ENCODE measurements at regions of chr5 and their contacts with region 1.

Region 1: GRCh38 chr5:112757468-112758208 is 20.0 kb downstream of the APC start:
- DNase-seq: no peak
- H3K4me3 ChIP-seq: no peak overlapping the region
- H3K27ac ChIP-seq: peak overlapping the region in 4 of 8 donors; percentile 26 to 42 (median 31)
- H3K4me1 ChIP-seq: peaks cover 0 to 19% (median 6%) of the 10 kb centered on the region in 6 donors
- H3K27me3 ChIP-seq: no peaks in the 10 kb centered on the region
- CTCF ChIP-seq: peak; percentile 60 to 86 (median 78)
- POLR2A ChIP-seq: no peak

Region 2: GRCh38 chr5:112174959-112175594 is 582.6 kb before region 1 on chr5:
- intact Hi-C with region 1: loop called (anchors 10 kb)
- DNase-seq: no peak
- H3K4me3 ChIP-seq: no peak overlapping the region
- H3K27ac ChIP-seq: no peak overlapping the region
- H3K4me1 ChIP-seq: peaks cover 0 to 7% (median 3%) of the 10 kb centered on the region in 6 donors
- H3K27me3 ChIP-seq: no peaks in the 10 kb centered on the region
- CTCF ChIP-seq: peak in 7 of 11 experiments; percentile 31 to 62 (median 53)
- POLR2A ChIP-seq: no peak

Region 3: GRCh38 chr5:112412346-112412745 is 345.3 kb before region 1 on chr5:
- intact Hi-C with region 1: no loop called
- DNase-seq: no peak
- H3K4me3 ChIP-seq: no peak overlapping the region
- H3K27ac ChIP-seq: peak overlapping the region in 5 of 8 donors; percentile 1 to 47 (median 9)
- H3K4me1 ChIP-seq: peaks cover 0 to 30% (median 6%) of the 10 kb centered on the region in 6 donors
- H3K27me3 ChIP-seq: peaks cover 0 to 25% (median 0%) of the 10 kb centered on the region in 7 donors
- CTCF ChIP-seq: no peak
- POLR2A ChIP-seq: no peak

Region 4: DNA sequence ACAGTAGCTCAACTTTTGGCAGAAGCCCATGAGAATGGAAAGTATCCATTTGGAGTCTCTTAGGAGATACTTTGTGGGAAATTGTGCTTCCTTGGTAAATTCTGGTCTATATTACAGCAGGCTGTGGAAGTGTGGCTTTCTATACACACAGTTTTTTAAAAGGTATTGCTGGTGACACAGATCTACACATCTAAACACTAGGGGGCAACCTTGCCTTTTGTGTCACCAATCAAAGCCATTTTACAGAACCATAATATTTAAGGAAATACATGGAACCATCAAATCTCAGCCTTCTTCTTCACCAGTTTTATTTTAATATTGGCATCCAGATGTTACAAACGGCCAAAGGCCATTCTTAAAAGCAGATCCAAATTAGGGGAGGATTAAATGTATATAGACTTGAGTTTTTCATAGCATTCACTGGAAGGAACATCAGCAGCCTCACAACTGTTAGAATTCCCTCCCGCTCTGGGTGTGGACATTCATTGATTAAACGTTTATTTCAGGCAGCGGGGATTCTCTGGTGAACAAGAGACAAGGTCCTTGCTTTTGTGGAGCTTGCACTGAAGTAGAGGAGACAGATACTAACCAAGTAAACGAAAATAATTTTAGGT is 206.1 kb before region 1 on chr5:
- intact Hi-C with region 1: loop called (anchors 2 kb)
- DNase-seq: no peak
- H3K4me3 ChIP-seq: no peak overlapping the region
- H3K27ac ChIP-seq: no peak overlapping the region
- H3K4me1 ChIP-seq: peaks cover 0 to 4% (median 0%) of the 10 kb centered on the region in 6 donors
- H3K27me3 ChIP-seq: no peaks in the 10 kb centered on the region
- CTCF ChIP-seq: peak; percentile 38 to 80 (median 68)
- POLR2A ChIP-seq: no peak

Measured in spleen (tissue), 13 donors.